ENCODE measurements at regions of chr5 and their contacts with region 1.

Region 1: DNA sequence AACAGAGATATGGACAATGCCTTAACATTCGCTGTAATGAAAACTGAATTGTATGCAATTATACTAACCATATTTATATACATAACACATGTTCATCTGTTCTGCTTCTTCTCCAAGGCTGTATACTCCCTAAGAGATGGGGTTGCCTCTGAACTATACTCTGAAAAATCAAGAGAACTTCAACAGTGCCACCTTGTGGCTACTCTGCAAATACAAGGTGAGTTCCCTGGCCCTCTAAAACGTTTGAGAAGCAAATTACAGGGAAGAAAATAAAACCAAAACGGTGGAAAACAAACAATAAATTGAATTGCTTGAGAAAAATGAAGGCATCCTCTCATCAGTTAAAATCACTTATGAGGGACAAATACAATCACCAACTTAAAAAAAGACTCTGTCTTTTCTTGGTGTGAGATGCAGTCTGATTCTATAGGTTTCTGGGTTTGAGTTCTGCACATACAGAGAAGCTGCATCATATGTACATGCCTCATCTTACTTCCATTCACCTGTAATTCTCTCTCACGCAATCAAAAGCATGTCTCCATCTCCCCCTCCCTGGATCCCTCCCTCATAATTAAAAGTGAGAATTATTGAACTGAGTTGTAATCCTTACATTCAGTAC is 98.6 kb downstream of the FBXW11 start:
- DNase-seq: peak; percentile 74 to 89 (median 84)
- H3K4me3 ChIP-seq: no peak overlapping the region
- H3K27ac ChIP-seq: no peak overlapping the region
- H3K4me1 ChIP-seq: peaks cover 17 to 45% (median 23%) of the 10 kb centered on the region in 4 experiments
- H3K27me3 ChIP-seq: no peaks in the 10 kb centered on the region

Region 2: DNA sequence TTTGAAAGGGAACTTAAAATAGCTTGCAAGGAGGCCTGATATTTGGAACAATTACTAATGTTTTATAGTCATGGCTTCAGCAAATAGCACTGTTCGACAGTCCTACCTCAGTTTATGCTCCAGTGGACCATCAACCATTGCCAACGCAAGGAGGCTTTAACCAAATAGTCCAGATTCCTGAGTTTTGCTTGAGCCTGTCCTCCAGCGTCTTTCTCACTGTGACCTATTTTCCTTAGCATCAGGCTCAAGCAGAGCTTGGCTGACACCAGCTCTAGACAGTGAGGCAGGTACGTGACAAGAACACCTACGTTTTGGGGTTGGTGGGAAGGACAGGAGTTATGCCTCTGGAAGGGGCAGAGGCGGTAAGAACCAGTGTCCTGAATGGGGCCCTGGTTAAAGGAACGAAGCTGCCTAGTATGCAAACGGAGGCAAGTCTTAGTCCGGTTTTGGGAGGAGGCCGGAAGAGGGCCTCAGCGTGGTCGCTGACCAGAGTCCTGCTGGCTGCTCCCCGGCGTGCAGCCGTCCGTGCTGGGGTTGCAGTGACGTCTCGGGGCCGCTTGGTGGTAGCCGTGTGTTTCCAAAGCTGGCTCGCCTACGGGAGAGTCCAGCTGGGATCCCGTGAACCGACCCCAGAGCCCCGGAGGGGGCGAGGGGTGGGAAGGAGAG is 489.4 kb before region 1 on chr5:
- CTCF ChIA-PET with region 1: interaction called, 118 read pairs
- POLR2A ChIA-PET with region 1: no interaction called
- DNase-seq: peak; percentile 46 to 62 (median 61)
- H3K4me3 ChIP-seq: peak overlapping the region; percentile 19 to 83 (median 57)
- H3K27ac ChIP-seq: no peak overlapping the region
- H3K4me1 ChIP-seq: peaks cover 0 to 28% (median 25%) of the 10 kb centered on the region in 4 experiments
- H3K27me3 ChIP-seq: peaks cover 0 to 25% (median 10%) of the 10 kb centered on the region in 5 experiments

Region 3: DNA sequence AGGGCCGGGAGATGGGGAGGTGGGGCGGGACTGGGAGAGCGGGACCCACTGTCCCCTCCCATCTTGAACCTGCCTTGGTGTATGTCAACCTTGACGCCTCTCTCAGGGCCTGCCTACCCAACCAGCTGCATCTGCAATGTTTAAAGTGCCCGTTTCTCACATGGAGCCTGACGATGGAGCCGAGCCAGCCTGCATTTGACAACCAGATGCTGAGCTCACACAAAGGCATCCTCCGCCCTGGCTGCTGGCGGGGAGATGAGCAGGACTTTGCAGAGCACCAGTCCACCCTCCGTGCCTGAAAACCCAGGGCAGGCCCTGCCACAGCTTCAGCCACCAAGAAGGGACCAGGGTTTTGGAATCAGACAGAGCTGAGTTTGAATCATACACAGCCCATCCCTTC is 263.3 kb before region 1 on chr5:
- CTCF ChIA-PET with region 1: no interaction called
- POLR2A ChIA-PET with region 1: no interaction called
- DNase-seq: no peak
- H3K4me3 ChIP-seq: no peak overlapping the region
- H3K27ac ChIP-seq: no peak overlapping the region
- H3K4me1 ChIP-seq: peaks cover 0 to 21% (median 4%) of the 10 kb centered on the region in 4 experiments
- H3K27me3 ChIP-seq: no peaks in the 10 kb centered on the region

Region 4: DNA sequence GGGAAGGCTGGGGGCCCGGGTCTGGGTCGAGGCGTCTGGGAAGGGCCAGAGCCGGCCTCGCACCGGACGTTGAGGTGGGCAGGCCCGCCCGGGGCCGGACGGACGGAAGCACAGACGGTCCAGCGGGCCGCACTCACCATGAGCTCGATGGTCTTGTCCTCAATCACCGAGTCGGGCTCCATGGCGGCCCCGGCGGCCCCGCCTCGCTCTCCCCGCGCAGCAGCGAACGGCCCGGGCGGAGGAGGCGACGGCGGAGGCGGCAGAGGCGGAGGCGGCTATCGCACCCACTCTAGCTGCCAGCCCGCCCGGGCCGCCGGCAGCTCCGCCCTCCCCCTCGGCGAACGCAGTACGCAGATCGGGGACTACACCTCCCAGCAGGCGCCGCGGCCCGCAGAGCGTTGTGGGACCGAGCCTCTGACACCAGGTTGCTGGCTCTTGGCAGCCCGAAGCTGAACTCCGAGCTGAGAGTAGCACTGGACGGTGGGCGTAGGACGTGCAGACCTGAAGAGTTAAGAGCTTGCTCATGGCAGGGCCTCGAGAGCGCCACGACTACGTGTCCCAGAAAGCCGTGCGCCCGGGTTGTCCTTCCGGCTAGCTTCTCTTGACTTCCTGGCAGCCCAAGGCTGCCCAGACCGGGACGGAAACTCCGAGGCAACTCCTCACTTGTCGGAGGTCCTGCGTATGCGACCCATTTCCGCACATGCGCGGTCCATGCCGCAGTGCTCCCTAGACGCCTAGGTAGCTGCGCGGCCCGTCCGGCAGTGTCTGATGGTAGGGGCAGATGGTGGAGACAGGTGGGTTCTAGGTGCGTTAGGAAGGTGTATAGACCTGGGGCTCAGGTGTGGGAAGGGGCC is 98.7 kb after region 1 on chr5 and contains the start of gene FBXW11:
- CTCF ChIA-PET with region 1: interaction called, 67 read pairs
- POLR2A ChIA-PET with region 1: no interaction called
- DNase-seq: peak; percentile 95 to 98 (median 97)
- H3K4me3 ChIP-seq: peak within 1 kb of the TSS; percentile 83 to 99 (median 96)
- H3K27ac ChIP-seq: peak within 1 kb of the TSS; percentile 96 to 97
- H3K4me1 ChIP-seq: peaks cover 18 to 51% (median 41%) of the 10 kb centered on the region in 4 experiments
- H3K27me3 ChIP-seq: no peaks in the 10 kb centered on the region

Region 5: DNA sequence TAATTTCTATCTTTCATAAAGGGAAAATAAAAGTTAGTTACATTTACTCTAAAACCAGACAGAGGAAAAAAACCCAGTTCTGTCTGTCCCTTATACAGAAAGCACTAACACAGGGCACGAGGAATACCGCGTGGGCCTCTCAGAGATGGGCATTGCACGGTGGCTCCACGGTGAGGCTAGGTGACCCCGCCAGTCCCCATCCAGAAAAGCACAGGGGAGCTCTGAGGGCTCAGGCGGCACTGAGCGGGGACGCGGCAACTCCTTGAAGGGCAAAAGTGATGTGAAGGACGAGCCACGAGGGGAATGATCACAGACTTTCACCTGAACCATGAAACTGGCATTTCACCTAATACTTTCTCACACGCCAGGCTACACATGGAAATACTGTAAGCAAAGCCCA is 134.3 kb after region 1 on chr5:
- CTCF ChIA-PET with region 1: interaction called, 97 read pairs
- POLR2A ChIA-PET with region 1: no interaction called
- DNase-seq: no peak
- H3K4me3 ChIP-seq: no peak overlapping the region
- H3K27ac ChIP-seq: no peak overlapping the region
- H3K4me1 ChIP-seq: no peaks in the 10 kb centered on the region
- H3K27me3 ChIP-seq: no peaks in the 10 kb centered on the region